Caco-2 (cell line): ENCODE measurements at regions of chr2 and their contacts with region 1.

Region 1: GRCh38 chr2:182077451-182078142 is 91.9 kb downstream of the PPP1R1C start:
- DNase-seq: peak; percentile 39 to 64
- H3K4me3 ChIP-seq: no peak overlapping the region
- H3K4me3 Mint-ChIP-seq: no peak overlapping the region
- H3K27ac Mint-ChIP-seq: no peak overlapping the region
- H3K4me1 ChIP-seq: no peaks in the 10 kb centered on the region
- H3K4me1 Mint-ChIP-seq: peaks cover 6% of the 10 kb centered on the region
- H3K27me3 ChIP-seq: no peaks in the 10 kb centered on the region
- H3K27me3 Mint-ChIP-seq: no peaks in the 10 kb centered on the region
- CTCF ChIP-seq: peak; percentile 67 to 68

Region 2: GRCh38 chr2:181573140-181573736 is 504.4 kb before region 1 on chr2:
- CTCF ChIA-PET with region 1: no interaction called
- POLR2A ChIA-PET with region 1: no interaction called
- intact Hi-C with region 1: loop called (anchors 5 kb)
- DNase-seq: peak in 1 of 2 experiments; percentile 49
- H3K4me3 ChIP-seq: no peak overlapping the region
- H3K4me3 Mint-ChIP-seq: no peak overlapping the region
- H3K27ac Mint-ChIP-seq: no peak overlapping the region
- H3K4me1 ChIP-seq: no peaks in the 10 kb centered on the region
- H3K4me1 Mint-ChIP-seq: no peaks in the 10 kb centered on the region
- H3K27me3 ChIP-seq: no peaks in the 10 kb centered on the region
- H3K27me3 Mint-ChIP-seq: peaks cover 4% of the 10 kb centered on the region
- CTCF ChIP-seq: peak in 1 of 2 experiments; percentile 63

Region 3: GRCh38 chr2:181742922-181743722 is 334.5 kb before region 1 on chr2:
- CTCF ChIA-PET with region 1: interaction called, 16 read pairs
- POLR2A ChIA-PET with region 1: no interaction called
- intact Hi-C with region 1: loop called (anchors 1 kb)
- DNase-seq: peak in 1 of 2 experiments; percentile 46
- H3K4me3 ChIP-seq: no peak overlapping the region
- H3K4me3 Mint-ChIP-seq: no peak overlapping the region
- H3K27ac Mint-ChIP-seq: no peak overlapping the region
- H3K4me1 ChIP-seq: no peaks in the 10 kb centered on the region
- H3K4me1 Mint-ChIP-seq: no peaks in the 10 kb centered on the region
- H3K27me3 ChIP-seq: no peaks in the 10 kb centered on the region
- H3K27me3 Mint-ChIP-seq: no peaks in the 10 kb centered on the region
- CTCF ChIP-seq: peak; percentile 57 to 63

Region 4: GRCh38 chr2:181904022-181904632 is 173.5 kb before region 1 on chr2:
- CTCF ChIA-PET with region 1: no interaction called
- POLR2A ChIA-PET with region 1: no interaction called
- intact Hi-C with region 1: loop called (anchors 1 kb)
- DNase-seq: peak in 1 of 2 experiments; percentile 52
- H3K4me3 ChIP-seq: no peak overlapping the region
- H3K4me3 Mint-ChIP-seq: no peak overlapping the region
- H3K27ac Mint-ChIP-seq: no peak overlapping the region
- H3K4me1 ChIP-seq: no peaks in the 10 kb centered on the region
- H3K4me1 Mint-ChIP-seq: no peaks in the 10 kb centered on the region
- H3K27me3 ChIP-seq: no peaks in the 10 kb centered on the region
- H3K27me3 Mint-ChIP-seq: no peaks in the 10 kb centered on the region
- CTCF ChIP-seq: peak; percentile 58 to 66

Region 5: DNA sequence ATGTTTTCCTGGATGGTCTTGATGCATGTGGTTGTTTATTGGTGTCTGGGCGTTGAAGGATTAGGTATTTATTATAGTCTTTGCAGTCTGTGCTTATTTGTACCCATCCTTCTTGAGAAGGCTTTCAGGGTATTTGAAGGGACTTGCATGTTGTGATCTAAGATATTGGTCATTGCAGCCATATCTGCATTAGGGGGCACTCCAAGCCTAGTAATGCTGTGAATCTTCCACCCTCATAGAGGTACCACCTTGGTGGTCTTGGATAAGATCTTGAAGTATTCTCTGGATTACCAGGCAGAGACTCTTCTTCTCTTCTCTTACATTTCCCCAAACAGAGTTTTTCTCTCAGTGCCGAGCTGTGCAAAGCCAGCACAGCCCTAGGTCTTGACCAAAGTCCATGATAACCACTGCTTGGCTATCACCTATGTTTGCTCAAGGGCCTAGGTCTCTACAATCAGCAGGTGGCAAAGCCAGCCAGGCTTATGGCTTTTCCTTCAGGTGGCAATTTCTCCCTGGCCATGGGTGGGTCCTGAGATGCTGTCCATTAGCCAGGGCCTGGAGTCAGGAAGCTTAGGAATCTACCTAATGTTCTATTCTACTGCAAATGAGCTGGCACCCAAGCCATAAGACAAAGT is 107.3 kb before region 1 on chr2:
- CTCF ChIA-PET with region 1: no interaction called
- POLR2A ChIA-PET with region 1: no interaction called
- intact Hi-C with region 1: loop called (anchors 1 kb)
- DNase-seq: no peak
- H3K4me3 ChIP-seq: no peak overlapping the region
- H3K4me3 Mint-ChIP-seq: no peak overlapping the region
- H3K27ac Mint-ChIP-seq: no peak overlapping the region
- H3K4me1 ChIP-seq: no peaks in the 10 kb centered on the region; the same call in 1 of the 2 replicates
- H3K4me1 Mint-ChIP-seq: peaks cover 9% of the 10 kb centered on the region
- H3K27me3 ChIP-seq: no peaks in the 10 kb centered on the region
- H3K27me3 Mint-ChIP-seq: no peaks in the 10 kb centered on the region
- CTCF ChIP-seq: no peak

Region 6: DNA sequence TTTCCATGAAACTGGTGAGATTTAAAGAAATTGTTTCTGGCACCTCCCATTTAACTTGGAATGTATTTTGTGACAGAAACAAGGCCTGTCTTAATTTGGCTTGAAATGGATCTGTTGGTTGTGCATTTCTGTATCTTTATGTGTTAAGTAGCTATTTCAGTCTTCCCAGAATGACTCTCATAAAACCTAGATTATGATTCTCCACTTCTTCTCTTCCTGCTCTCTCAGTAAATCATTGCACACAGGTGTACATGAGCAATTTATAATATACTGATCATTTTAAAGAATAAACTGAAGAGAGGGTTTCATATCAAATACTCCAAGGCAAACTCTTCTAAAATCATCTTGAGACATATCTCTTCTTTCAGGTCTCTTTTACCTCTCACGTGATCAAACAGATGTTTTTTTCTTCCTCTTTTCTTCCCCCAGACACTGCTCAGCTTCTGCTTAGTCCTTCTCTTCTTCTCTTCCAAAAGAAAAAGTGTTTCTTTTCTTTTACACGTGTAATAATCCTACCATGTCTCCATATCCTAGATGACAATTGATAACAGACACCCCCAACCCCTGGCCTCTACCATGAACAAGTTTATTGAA is 20.1 kb after region 1 on chr2:
- CTCF ChIA-PET with region 1: no interaction called
- POLR2A ChIA-PET with region 1: no interaction called
- intact Hi-C with region 1: no loop called
- DNase-seq: no peak
- H3K4me3 ChIP-seq: no peak overlapping the region
- H3K4me3 Mint-ChIP-seq: no peak overlapping the region
- H3K27ac Mint-ChIP-seq: no peak overlapping the region
- H3K4me1 ChIP-seq: no peaks in the 10 kb centered on the region
- H3K4me1 Mint-ChIP-seq: no peaks in the 10 kb centered on the region
- H3K27me3 ChIP-seq: no peaks in the 10 kb centered on the region
- H3K27me3 Mint-ChIP-seq: no peaks in the 10 kb centered on the region
- CTCF ChIP-seq: no peak

Region 7: GRCh38 chr2:182732736-182733135 is 655.1 kb after region 1 on chr2:
- CTCF ChIA-PET with region 1: no interaction called
- POLR2A ChIA-PET with region 1: no interaction called
- intact Hi-C with region 1: no loop called
- DNase-seq: no peak
- H3K4me3 ChIP-seq: no peak overlapping the region
- H3K4me3 Mint-ChIP-seq: no peak overlapping the region
- H3K27ac Mint-ChIP-seq: no peak overlapping the region
- H3K4me1 ChIP-seq: no peaks in the 10 kb centered on the region
- H3K4me1 Mint-ChIP-seq: no peaks in the 10 kb centered on the region
- H3K27me3 ChIP-seq: no peaks in the 10 kb centered on the region
- H3K27me3 Mint-ChIP-seq: no peaks in the 10 kb centered on the region
- CTCF ChIP-seq: no peak